ENCODE measurements at regions of chr15 and their contacts with region 1.

Region 1: GRCh38 chr15:41603941-41604911 is 45.2 kb downstream of the TYRO3 start:
- DNase-seq: peak; percentile 74
- H3K4me3 ChIP-seq: peak overlapping the region in 1 of 3 experiments; percentile 15
- H3K27ac ChIP-seq: no peak overlapping the region
- H3K4me1 ChIP-seq: peaks cover 7% of the 10 kb centered on the region
- H3K27me3 ChIP-seq: peaks cover 3 to 8% of the 10 kb centered on the region in 2 experiments
- CTCF ChIP-seq: peak; percentile 76 to 80
- POLR2A ChIP-seq: no peak

Region 2: DNA sequence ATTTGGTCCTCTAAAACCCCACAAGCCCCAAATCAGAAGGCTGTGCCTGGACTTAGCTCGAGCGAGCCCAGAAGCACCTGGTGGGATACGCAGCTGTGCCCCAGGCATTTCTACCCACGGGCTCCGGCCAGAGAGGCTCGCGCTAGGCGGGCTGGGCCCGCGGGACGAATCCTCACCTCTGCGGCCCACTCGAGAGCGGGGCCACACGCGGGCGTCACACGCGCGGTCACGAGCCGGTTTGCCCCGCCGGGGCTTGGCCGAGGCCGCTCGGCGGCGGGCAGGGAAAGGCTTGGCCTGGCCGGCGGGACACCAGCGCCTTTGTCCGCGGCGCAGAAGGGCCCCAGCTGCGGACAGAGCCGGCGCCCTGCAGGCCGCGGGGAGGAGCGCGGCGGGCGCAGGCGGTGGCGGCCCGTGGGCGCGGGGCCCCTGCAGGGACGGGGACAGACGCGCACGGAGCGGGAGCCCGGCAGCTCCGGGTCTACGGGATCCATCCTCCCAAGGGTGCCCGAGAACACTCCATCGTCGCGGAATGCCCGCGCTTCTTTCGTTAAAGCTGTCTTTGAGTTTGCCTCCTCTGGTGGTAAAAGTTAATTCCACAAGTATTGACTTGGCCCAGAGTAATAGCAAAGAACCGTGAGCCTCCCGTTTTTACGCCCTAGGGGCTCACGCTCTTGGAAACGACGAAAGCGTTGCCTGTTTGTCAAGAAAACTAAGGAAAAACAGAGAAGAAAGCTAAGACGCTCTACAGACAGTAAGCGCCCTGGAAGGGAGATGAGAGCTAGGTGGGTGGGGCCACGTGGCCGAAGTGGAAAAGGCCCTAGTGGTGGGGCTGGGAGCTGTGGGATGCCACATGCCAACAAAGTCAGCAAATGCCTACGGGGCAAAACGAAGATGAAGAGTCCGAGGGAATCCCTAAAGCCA is 18.8 kb before region 1 on chr15:
- CTCF ChIA-PET with region 1: interaction called, 22 read pairs
- POLR2A ChIA-PET with region 1: no interaction called
- dilution Hi-C with region 1: no loop called
- intact Hi-C with region 1: no loop called
- DNase-seq: peak; percentile 73
- H3K4me3 ChIP-seq: peak overlapping the region; percentile 29 to 59 (median 51)
- H3K27ac ChIP-seq: no peak overlapping the region
- H3K4me1 ChIP-seq: peaks cover 9% of the 10 kb centered on the region
- H3K27me3 ChIP-seq: peaks cover 2 to 5% of the 10 kb centered on the region in 2 experiments
- CTCF ChIP-seq: peak; percentile 32 to 62
- POLR2A ChIP-seq: no peak

Region 3: GRCh38 chr15:41629463-41629862 is 25.2 kb after region 1 on chr15:
- CTCF ChIA-PET with region 1: interaction called, 10 read pairs
- POLR2A ChIA-PET with region 1: no interaction called
- dilution Hi-C with region 1: no loop called
- intact Hi-C with region 1: no loop called
- DNase-seq: no peak
- H3K4me3 ChIP-seq: no peak overlapping the region
- H3K27ac ChIP-seq: no peak overlapping the region
- H3K4me1 ChIP-seq: peaks cover 2% of the 10 kb centered on the region
- H3K27me3 ChIP-seq: no peaks in the 10 kb centered on the region
- CTCF ChIP-seq: no peak
- POLR2A ChIP-seq: no peak

Region 4: DNA sequence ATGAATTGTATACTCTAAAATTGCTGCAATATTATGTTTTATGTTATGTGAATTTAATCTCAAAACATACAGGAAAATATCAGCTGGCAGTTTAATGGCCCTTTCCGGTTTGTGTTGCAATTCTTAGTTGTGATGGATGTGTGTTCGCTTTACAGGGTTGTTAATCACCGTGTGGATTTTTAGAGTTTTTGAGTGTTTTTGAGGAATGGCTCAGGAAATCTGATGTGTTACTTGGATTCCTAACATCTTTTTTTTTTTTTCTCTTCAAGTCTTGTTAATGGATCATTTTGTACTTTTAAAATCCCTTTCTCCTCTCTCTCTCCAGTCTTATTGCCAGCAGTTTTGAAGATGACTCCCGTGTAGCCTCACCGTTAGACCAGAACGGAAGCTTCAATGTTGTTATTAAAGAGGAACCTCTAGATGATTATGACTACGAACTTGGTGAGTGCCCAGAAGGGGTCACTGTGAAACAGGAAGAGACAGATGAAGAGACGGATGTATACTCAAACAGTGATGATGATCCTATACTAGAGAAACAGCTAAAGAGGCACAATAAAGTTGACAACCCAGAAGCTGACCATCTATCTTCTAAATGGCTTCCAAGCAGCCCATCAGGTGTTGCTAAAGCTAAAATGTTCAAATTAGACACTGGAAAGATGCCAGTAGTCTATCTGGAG is 91.7 kb after region 1 on chr15:
- CTCF ChIA-PET with region 1: interaction called, 7 read pairs
- POLR2A ChIA-PET with region 1: no interaction called
- dilution Hi-C with region 1: no loop called
- intact Hi-C with region 1: loop called (anchors 10 kb)
- DNase-seq: peak; percentile 77
- H3K4me3 ChIP-seq: peak overlapping the region in 1 of 3 experiments; percentile 33
- H3K27ac ChIP-seq: peak overlapping the region; percentile 52
- H3K4me1 ChIP-seq: peaks cover 16% of the 10 kb centered on the region
- H3K27me3 ChIP-seq: no peaks in the 10 kb centered on the region
- CTCF ChIP-seq: peak in 1 of 2 donors; percentile 20
- POLR2A ChIP-seq: peak; percentile 23

Region 5: DNA sequence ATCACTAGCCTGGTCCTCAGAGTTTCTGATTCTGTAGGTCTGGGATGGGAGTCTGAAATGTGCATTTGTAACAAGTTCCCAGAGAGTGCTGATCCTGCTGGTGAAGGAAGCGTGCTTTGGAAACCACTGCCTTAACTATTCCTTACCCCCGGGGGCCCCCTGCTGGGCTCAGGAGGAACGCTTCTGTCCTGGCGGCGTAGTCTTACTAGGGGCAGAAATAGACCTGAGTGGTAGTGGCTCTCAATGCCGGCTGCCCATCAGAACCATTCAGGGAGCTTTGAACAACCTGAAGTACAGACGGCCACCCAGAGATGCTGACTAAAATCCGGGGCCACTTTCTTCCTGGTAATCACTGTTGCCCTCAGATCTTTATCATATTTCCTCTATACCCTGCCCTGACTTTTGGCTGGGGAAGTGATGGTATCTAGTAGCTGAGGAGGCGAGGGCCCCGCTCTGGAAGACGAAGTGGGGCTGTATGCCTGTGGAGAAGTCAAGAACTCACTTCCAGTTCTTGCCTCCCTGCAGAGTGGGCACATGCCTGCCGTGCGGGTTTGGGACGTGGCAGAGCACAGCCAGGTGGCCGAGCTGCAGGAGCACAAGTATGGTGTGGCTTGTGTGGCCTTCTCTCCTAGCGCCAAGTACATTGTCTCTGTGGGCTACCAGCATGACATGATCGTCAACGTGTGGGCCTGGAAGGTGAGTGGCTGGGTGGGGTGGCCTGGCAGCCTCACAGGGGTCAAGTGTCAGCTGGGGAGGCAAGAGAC is 207.4 kb after region 1 on chr15:
- CTCF ChIA-PET with region 1: interaction called, 40 read pairs
- POLR2A ChIA-PET with region 1: no interaction called
- dilution Hi-C with region 1: no loop called
- intact Hi-C with region 1: loop called (anchors 1 kb)
- DNase-seq: peak; percentile 84
- H3K4me3 ChIP-seq: no peak overlapping the region
- H3K27ac ChIP-seq: no peak overlapping the region
- H3K4me1 ChIP-seq: peaks cover 8% of the 10 kb centered on the region
- H3K27me3 ChIP-seq: no peaks in the 10 kb centered on the region
- CTCF ChIP-seq: peak; percentile 93 to 94
- POLR2A ChIP-seq: no peak

Region 6: DNA sequence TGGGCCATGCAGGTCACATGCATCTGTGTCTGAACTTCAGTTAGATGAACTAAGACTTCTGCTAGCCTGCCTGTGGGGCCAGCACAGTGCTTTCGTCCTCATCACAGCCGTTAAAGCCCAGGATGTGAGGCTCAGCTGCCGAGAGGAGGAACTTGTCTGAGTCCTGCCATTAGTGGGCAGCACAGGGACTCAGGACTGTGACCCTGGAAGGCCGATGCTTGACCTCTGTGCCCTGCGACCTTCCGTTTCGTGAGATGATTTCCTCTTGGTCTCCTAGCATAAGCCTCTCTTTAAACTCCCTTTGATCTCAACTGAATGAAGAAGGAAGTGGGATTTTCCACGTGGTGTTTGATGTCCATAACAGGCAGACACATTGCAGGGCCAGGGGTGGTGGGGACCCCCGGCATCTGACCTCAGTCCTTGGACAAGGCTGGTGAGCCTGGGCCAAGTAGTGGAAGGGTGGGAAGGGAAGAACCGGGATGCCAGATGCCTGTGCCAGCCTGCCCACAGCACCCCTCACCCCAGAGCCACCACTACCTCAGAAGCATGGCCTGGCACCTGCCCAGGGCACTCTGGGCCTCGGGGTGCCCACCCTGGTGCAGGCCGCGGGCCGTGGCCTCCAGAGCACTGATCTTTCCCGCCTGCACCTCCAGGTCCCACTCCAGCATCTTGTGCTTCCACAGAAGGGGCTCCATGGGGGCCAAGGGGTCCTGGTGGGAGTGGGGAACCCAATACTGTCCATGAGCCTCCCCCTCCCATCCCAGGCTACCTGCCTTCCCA is 256.0 kb after region 1 on chr15:
- CTCF ChIA-PET with region 1: no interaction called
- POLR2A ChIA-PET with region 1: no interaction called
- dilution Hi-C with region 1: no loop called
- intact Hi-C with region 1: no loop called
- DNase-seq: no peak
- H3K4me3 ChIP-seq: no peak overlapping the region
- H3K27ac ChIP-seq: no peak overlapping the region
- H3K4me1 ChIP-seq: no peaks in the 10 kb centered on the region
- H3K27me3 ChIP-seq: no peaks in the 10 kb centered on the region
- CTCF ChIP-seq: peak in 1 of 2 donors; percentile 6
- POLR2A ChIP-seq: no peak

Measured in endothelial cell of umbilical vein (primary cell).